Activated CD8-positive, alpha-beta T cell treated with anti-CD3 and anti-CD28 coated beads for 36 hours (primary cell): ENCODE measurements at regions of chr21 and their contacts with region 1.

Region 1: GRCh38 chr21:42818328-42818749 is 61.0 kb downstream of the WDR4 start:
- DNase-seq: peak; percentile 80
- ATAC-seq: peak; percentile 94
- H3K4me3 Mint-ChIP-seq: no peak overlapping the region
- H3K27ac Mint-ChIP-seq: no peak overlapping the region
- H3K4me1 Mint-ChIP-seq: peaks cover 2% of the 10 kb centered on the region
- H3K27me3 Mint-ChIP-seq: peaks cover 2% of the 10 kb centered on the region
- CTCF ChIP-seq: peak; percentile 98

Region 2: DNA sequence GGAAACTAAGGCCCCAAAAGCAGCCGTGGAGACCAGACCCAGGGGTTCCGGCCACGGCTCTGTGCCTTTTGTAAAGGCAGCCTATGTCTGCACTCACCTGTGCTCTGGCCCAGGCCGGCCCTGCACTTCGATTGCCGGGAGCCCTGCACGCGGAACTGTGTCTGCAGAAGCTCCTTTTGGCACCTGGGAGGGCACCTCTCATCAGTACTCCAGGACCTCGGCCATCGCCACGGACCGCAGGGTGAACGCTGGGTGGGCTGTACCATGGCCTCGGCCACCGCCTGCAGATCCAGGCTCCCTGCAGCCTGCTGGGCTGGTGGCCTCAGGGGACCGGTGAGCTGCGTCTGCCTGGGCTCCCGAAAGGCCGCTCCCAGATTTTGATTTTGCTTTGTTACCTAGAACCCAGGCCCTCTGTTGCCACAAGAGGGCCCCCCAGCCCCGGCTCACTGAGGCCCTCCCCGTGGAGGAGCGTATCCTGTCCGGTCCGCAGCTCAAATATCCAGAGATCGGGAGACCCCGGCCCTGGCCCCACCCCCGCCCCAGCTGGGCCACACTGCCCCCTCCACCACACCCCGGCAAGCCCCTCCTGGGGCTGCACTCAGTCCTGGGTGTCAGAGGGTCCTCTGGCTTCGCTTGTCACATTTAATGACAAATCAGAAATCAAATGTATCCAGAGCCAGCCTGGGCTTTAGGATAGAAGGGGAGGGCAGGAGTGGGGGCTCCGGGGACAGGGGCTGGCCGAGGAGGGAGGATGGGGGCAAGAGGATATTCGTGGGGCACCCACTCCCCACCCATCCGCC is 225.1 kb before region 1 on chr21:
- CTCF ChIA-PET with region 1: interaction called, 46 read pairs
- POLR2A ChIA-PET with region 1: no interaction called
- intact Hi-C with region 1: loop called (anchors 5 kb)
- DNase-seq: peak; percentile 81
- ATAC-seq: peak; percentile 86
- H3K4me3 Mint-ChIP-seq: no peak overlapping the region
- H3K27ac Mint-ChIP-seq: no peak overlapping the region
- H3K4me1 Mint-ChIP-seq: peaks cover 17% of the 10 kb centered on the region
- H3K27me3 Mint-ChIP-seq: no peaks in the 10 kb centered on the region
- CTCF ChIP-seq: peak; percentile 79

Region 3: DNA sequence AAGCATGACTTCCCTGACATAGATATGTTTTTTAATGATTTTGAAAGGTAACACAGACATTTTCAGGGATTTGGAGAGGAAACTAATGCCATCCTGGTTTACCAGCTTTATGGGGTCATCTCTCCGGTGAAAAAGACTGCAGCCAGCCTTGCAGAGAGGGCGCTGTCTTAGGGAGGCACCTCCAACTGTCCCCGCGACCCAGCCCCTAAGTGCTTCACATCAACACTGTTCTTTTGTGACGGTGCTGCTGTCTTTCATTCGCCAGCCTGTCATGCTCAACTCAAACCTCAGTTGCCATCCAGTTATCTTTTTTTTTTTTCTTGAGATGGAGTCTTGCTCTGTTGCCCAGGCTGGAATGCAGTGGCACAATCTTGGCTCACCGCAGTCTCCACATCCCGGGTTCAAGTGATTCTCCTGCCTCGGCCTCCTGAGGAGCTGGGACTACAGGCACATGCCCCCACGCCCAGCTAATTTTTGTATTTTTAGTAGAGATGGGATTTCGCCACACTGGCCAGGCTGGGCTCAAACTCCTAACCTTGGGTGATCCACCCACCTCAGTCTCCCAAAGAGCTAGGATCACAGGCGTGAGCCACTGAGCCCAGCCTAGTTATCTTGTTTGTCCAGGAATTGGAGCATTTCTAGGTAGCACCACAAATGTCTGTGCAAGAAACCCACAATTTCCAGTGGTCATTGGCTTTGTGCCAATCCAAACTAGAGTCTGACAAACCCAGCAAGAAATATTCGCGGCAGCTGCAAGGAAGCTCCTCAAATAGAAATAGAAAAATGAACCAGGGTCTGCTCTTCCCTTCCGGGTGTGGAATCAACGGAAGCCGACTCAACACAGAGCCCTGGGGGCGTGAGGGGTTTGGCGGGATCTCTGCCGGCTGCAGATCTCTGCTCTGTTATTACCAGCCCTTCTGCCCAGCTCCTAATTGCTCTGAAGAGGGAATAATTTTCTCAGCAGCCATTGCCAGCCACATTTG is 140.7 kb before region 1 on chr21:
- CTCF ChIA-PET with region 1: interaction called, 4 read pairs
- POLR2A ChIA-PET with region 1: no interaction called
- intact Hi-C with region 1: loop called (anchors 10 kb)
- DNase-seq: no peak
- ATAC-seq: no peak
- H3K4me3 Mint-ChIP-seq: no peak overlapping the region
- H3K27ac Mint-ChIP-seq: no peak overlapping the region
- H3K4me1 Mint-ChIP-seq: peaks cover 32% of the 10 kb centered on the region
- H3K27me3 Mint-ChIP-seq: no peaks in the 10 kb centered on the region
- CTCF ChIP-seq: no peak

Region 4: GRCh38 chr21:42829954-42830353 is 11.6 kb after region 1 on chr21:
- CTCF ChIA-PET with region 1: interaction called, 10 read pairs
- POLR2A ChIA-PET with region 1: interaction called, 4 read pairs
- intact Hi-C with region 1: no loop called
- DNase-seq: no peak
- ATAC-seq: no peak
- H3K4me3 Mint-ChIP-seq: no peak overlapping the region
- H3K27ac Mint-ChIP-seq: no peak overlapping the region
- H3K4me1 Mint-ChIP-seq: peaks cover 32% of the 10 kb centered on the region
- H3K27me3 Mint-ChIP-seq: peaks cover 25% of the 10 kb centered on the region
- CTCF ChIP-seq: no peak